Natural killer cell (primary cell): ENCODE measurements at regions of chr9 and their contacts with region 1.

Region 1: DNA sequence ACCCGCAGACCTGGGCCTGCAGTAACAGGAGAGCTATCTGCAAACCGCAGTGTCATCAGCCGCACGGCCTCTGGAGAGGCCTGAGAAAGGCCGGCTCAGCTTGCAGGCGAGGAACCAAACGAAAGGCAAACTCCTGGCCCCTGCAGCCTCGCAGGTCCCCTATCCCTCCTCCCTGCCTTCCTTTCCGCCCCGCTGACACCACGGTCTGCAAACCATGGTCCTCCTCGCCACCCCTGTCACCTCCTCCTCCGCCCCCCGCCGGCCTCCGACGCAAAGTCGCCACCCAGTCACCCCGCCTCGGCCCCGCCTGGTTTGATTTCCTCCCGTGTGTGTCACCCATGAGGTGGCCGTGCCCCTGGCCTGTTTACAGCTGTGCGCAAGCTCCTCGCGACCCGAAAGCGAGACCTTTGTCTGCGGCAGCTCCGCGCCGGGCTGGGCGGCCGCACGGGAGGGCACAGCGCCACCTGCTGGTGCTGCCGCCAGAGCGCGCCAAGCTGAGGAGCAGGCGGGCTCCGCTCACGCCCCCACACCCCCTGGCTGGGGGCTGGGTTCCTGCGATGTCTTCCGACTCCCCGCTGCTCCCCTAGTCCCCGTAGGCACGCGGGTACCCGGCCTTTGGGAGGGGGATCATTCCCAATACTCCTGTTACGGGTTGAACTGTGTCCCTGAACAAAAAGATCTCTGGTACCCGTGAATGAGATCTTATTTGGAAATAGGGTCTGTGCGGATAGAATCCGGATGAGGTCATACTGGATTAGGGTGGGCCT is 19.4 kb downstream of the GBGT1 start:
- DNase-seq: peak; percentile 93 to 97
- ATAC-seq: peak; percentile 58 to 85 (median 73)
- H3K4me3 ChIP-seq: peak overlapping the region; percentile 32
- H3K4me3 Mint-ChIP-seq: peak overlapping the region; percentile 82
- H3K27ac ChIP-seq: peak overlapping the region; percentile 97
- H3K27ac Mint-ChIP-seq: peak overlapping the region; percentile 98
- H3K4me1 ChIP-seq: peaks cover 87% of the 10 kb centered on the region
- H3K4me1 Mint-ChIP-seq: peaks cover 50 to 60% of the 10 kb centered on the region in 2 donors
- H3K27me3 ChIP-seq: no peaks in the 10 kb centered on the region
- H3K27me3 Mint-ChIP-seq: no peaks in the 10 kb centered on the region
- CTCF ChIP-seq: peak; percentile 99

Region 2: GRCh38 chr9:133113949-133114885 is 30.1 kb before region 1 on chr9:
- intact Hi-C with region 1: loop called (anchors 2 kb)
- DNase-seq: peak in 1 of 2 donors; percentile 37
- ATAC-seq: peak; percentile 3 to 11 (median 4)
- H3K4me3 ChIP-seq: no peak overlapping the region
- H3K4me3 Mint-ChIP-seq: peak overlapping the region; percentile 80
- H3K27ac ChIP-seq: peak overlapping the region; percentile 81
- H3K27ac Mint-ChIP-seq: peak overlapping the region; percentile 94 to 97
- H3K4me1 ChIP-seq: peaks cover 74% of the 10 kb centered on the region
- H3K4me1 Mint-ChIP-seq: peaks cover 57 to 66% of the 10 kb centered on the region in 2 donors
- H3K27me3 ChIP-seq: no peaks in the 10 kb centered on the region
- H3K27me3 Mint-ChIP-seq: no peaks in the 10 kb centered on the region
- CTCF ChIP-seq: no peak

Region 3: GRCh38 chr9:133121198-133121939 is 23.0 kb before region 1 on chr9 and contains the start of gene RALGDS:
- intact Hi-C with region 1: loop called (anchors 1 kb)
- DNase-seq: peak; percentile 87 to 95
- ATAC-seq: peak; percentile 78 to 92 (median 84)
- H3K4me3 ChIP-seq: peak within 1 kb of the TSS; percentile 44
- H3K4me3 Mint-ChIP-seq: peak within 1 kb of the TSS; percentile 82
- H3K27ac ChIP-seq: peak within 1 kb of the TSS; percentile 97
- H3K27ac Mint-ChIP-seq: peak within 1 kb of the TSS; percentile 75 to 97
- H3K4me1 ChIP-seq: peaks cover 92% of the 10 kb centered on the region
- H3K4me1 Mint-ChIP-seq: peaks cover 40 to 68% of the 10 kb centered on the region in 2 donors
- H3K27me3 ChIP-seq: no peaks in the 10 kb centered on the region
- H3K27me3 Mint-ChIP-seq: no peaks in the 10 kb centered on the region
- CTCF ChIP-seq: no peak
- total RNA-seq, gene RALGDS: 206 to 250 (median 208) TPM

Region 4: DNA sequence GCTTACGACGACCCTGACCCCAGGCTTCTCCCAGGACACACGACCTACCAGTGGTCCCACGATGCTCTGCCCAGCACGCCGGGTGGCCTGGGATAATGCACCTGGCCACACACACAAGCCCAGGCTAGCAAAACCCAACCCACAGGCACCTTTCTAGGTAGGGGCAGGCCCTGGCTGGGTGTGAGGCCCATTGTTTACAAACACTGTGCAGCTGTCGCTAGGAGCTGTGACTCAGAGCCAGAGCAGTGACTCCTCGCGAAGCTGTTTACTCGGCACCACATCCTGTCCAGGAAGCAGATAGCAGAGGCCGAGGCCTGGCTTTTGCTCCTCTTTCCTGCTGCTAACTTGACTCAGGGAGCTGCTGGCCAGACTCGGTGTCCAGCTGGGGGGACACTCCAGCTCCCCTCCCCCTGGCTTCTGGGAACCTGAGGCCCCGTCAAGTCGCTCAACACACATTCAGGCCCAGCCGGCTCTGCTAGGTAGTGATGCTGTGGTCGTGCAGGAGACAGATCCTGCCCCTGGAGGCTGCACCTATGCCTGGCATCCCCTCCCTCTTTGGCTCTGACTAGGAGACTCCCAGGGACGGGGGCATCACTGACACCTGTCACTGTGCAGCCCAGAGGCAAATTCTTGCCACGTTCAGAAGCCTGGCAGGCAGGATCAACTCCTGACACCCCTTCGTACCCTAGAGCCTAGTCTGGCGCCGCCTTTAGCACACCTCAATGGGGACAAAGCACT is 10.5 kb before region 1 on chr9:
- intact Hi-C with region 1: loop called (anchors 1 kb)
- DNase-seq: peak; percentile 85 to 97
- ATAC-seq: peak; percentile 66 to 91 (median 82)
- H3K4me3 ChIP-seq: no peak overlapping the region
- H3K4me3 Mint-ChIP-seq: peak overlapping the region; percentile 87
- H3K27ac ChIP-seq: peak overlapping the region; percentile 99
- H3K27ac Mint-ChIP-seq: peak overlapping the region; percentile 75 to 93
- H3K4me1 ChIP-seq: peaks cover 82% of the 10 kb centered on the region
- H3K4me1 Mint-ChIP-seq: peaks cover 58 to 73% of the 10 kb centered on the region in 2 donors
- H3K27me3 ChIP-seq: no peaks in the 10 kb centered on the region
- H3K27me3 Mint-ChIP-seq: no peaks in the 10 kb centered on the region
- CTCF ChIP-seq: no peak

Region 5: DNA sequence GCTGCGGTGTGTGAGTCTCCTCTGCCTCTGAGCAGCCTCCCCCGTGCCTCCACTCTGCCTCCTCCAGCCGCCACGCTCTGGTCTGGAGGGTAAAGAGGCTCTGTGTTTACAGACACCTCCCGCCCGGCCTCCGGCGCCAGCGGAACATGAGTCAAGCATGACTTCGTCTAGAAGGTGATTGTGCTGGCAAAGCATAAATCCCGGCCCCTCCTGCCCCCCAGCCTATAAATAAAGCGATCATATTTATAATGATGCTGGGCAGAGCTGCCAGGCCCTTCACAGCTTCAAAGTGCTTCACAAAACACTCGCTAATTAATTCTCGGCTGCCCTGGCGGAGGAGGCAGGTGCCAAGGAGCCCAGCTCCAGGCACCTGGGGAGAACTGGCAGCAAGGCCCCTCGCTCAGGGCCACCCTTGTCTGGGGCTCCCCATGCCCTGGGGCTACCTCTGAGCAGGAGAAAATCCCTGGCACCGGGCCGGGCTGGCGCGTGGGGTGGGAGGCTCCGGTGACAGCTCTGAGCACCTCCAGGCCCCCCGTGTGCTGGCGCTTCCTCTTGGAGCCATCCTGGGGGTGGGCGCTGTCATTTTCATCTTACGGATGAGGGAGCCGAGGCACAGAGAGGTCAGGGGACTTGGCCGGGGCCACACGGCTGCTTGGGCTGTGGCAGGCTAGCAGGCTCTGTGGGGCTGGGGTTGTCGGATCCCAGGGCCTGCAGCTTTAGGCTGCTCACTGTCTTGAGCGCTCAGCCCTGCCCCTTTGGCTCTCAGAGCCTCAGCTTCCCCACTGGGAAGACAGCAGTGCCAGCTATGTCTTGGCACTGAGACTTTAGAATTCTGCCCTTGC is 1269.8 kb after region 1 on chr9:
- intact Hi-C with region 1: no loop called
- DNase-seq: no peak
- ATAC-seq: no peak
- H3K4me3 ChIP-seq: no peak overlapping the region
- H3K4me3 Mint-ChIP-seq: no peak overlapping the region
- H3K27ac ChIP-seq: no peak overlapping the region
- H3K27ac Mint-ChIP-seq: no peak overlapping the region
- H3K4me1 ChIP-seq: peaks cover 35% of the 10 kb centered on the region
- H3K4me1 Mint-ChIP-seq: peaks cover 8 to 28% of the 10 kb centered on the region in 2 donors
- H3K27me3 ChIP-seq: no peaks in the 10 kb centered on the region
- H3K27me3 Mint-ChIP-seq: no peaks in the 10 kb centered on the region
- CTCF ChIP-seq: no peak